Endothelial cell of umbilical vein (primary cell): ENCODE measurements at regions of chr11 and their contacts with region 1.

Region 1: DNA sequence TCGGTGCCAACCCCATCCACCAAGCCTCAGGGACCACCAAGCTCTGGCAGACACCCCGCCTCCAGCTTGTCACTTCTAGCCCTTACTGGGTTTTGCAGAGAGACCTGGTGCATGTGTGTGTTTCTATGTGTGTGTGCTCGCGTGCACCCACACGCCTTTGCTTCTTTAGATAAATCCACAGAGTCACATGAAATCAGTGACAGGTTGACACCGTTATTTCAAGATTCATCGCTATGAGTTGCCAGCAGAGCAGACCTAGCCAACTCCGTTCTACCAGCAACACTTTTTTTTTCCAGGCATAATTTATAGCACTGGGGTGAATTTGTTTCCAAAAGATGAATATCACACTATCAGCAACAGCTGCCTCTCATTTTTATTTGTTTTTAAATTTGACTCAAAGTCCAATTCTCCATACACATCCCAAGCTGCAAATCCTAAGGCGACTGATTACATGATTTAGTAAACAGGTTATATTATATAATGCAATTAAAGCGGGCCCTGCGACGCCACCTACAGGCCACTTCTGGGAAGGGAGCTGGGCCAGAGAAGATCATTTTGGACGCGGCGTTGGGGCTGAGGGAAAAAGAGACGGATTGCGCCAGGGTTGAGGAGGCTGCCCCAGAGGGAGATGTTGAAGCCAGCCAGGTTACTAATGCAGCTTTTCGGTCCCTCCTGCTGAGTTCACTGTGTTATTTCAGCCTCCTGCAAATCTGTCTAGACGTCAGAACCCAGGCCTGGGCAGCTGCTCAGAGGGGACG is 150.5 kb downstream of the FEZ1 start:
- DNase-seq: peak; percentile 67
- H3K4me3 ChIP-seq: no peak overlapping the region
- H3K27ac ChIP-seq: no peak overlapping the region
- H3K4me1 ChIP-seq: no peaks in the 10 kb centered on the region
- H3K27me3 ChIP-seq: no peaks in the 10 kb centered on the region
- CTCF ChIP-seq: peak; percentile 84 to 90
- POLR2A ChIP-seq: no peak

Region 2: GRCh38 chr11:124961972-124962609 is 383.5 kb before region 1 on chr11:
- CTCF ChIA-PET with region 1: interaction called, 40 read pairs
- POLR2A ChIA-PET with region 1: no interaction called
- dilution Hi-C with region 1: no loop called
- intact Hi-C with region 1: loop called (anchors 1 kb)
- DNase-seq: peak; percentile 86
- H3K4me3 ChIP-seq: no peak overlapping the region
- H3K27ac ChIP-seq: no peak overlapping the region
- H3K4me1 ChIP-seq: no peaks in the 10 kb centered on the region
- H3K27me3 ChIP-seq: no peaks in the 10 kb centered on the region
- CTCF ChIP-seq: peak; percentile 50 to 60
- POLR2A ChIP-seq: no peak

Region 3: GRCh38 chr11:125148743-125149142 is 196.9 kb before region 1 on chr11:
- CTCF ChIA-PET with region 1: interaction called, 45 read pairs
- POLR2A ChIA-PET with region 1: no interaction called
- dilution Hi-C with region 1: no loop called
- intact Hi-C with region 1: no loop called
- DNase-seq: no peak
- H3K4me3 ChIP-seq: no peak overlapping the region
- H3K27ac ChIP-seq: no peak overlapping the region
- H3K4me1 ChIP-seq: no peaks in the 10 kb centered on the region
- H3K27me3 ChIP-seq: peaks cover 8 to 13% of the 10 kb centered on the region in 2 experiments
- CTCF ChIP-seq: no peak
- POLR2A ChIP-seq: no peak

Region 4: DNA sequence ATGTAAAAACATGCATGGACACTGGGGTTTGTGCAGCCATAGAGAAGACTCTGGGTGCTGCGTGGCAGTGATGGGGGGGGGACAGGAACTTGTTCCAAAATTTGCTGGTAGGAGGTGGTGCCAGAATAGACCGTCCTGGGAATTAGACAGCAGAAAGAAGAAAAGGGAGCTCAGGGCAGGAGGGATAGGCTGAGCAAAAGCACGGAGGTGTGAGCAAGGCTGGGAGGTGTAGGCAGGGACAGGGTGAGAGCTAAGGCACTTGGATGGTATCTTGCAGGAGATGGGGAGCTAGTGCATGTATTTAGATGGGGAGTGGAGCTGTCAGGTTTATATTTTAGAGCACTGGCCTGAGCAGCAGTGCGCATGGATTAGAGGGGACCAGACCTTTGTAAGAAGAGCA is 127.3 kb before region 1 on chr11:
- CTCF ChIA-PET with region 1: interaction called, 21 read pairs
- POLR2A ChIA-PET with region 1: no interaction called
- dilution Hi-C with region 1: no loop called
- intact Hi-C with region 1: no loop called
- DNase-seq: no peak
- H3K4me3 ChIP-seq: no peak overlapping the region
- H3K27ac ChIP-seq: no peak overlapping the region
- H3K4me1 ChIP-seq: no peaks in the 10 kb centered on the region
- H3K27me3 ChIP-seq: peaks cover 4 to 24% of the 10 kb centered on the region in 2 experiments
- CTCF ChIP-seq: no peak
- POLR2A ChIP-seq: no peak

Region 5: GRCh38 chr11:125281831-125282595 is 63.6 kb before region 1 on chr11:
- CTCF ChIA-PET with region 1: interaction called, 14 read pairs
- POLR2A ChIA-PET with region 1: no interaction called
- dilution Hi-C with region 1: no loop called
- intact Hi-C with region 1: no loop called
- DNase-seq: no peak
- H3K4me3 ChIP-seq: no peak overlapping the region
- H3K27ac ChIP-seq: no peak overlapping the region
- H3K4me1 ChIP-seq: no peaks in the 10 kb centered on the region
- H3K27me3 ChIP-seq: peaks cover 0 to 4% of the 10 kb centered on the region in 2 experiments
- CTCF ChIP-seq: no peak
- POLR2A ChIP-seq: no peak

Region 6: GRCh38 chr11:125335106-125335505 is 10.5 kb before region 1 on chr11:
- CTCF ChIA-PET with region 1: interaction called, 67 read pairs
- POLR2A ChIA-PET with region 1: no interaction called
- dilution Hi-C with region 1: no loop called
- intact Hi-C with region 1: no loop called
- DNase-seq: no peak
- H3K4me3 ChIP-seq: no peak overlapping the region
- H3K27ac ChIP-seq: no peak overlapping the region
- H3K4me1 ChIP-seq: no peaks in the 10 kb centered on the region
- H3K27me3 ChIP-seq: peaks cover 5 to 13% of the 10 kb centered on the region in 2 experiments
- CTCF ChIP-seq: no peak
- POLR2A ChIP-seq: no peak

Region 7: GRCh38 chr11:125429166-125429707 is 83.6 kb after region 1 on chr11:
- CTCF ChIA-PET with region 1: interaction called, 12 read pairs
- POLR2A ChIA-PET with region 1: no interaction called
- dilution Hi-C with region 1: no loop called
- intact Hi-C with region 1: no loop called
- DNase-seq: peak; percentile 59
- H3K4me3 ChIP-seq: no peak overlapping the region
- H3K27ac ChIP-seq: no peak overlapping the region
- H3K4me1 ChIP-seq: no peaks in the 10 kb centered on the region
- H3K27me3 ChIP-seq: no peaks in the 10 kb centered on the region
- CTCF ChIP-seq: peak; percentile 70 to 81
- POLR2A ChIP-seq: no peak

Region 8: GRCh38 chr11:125799808-125800207 is 454.2 kb after region 1 on chr11:
- CTCF ChIA-PET with region 1: no interaction called
- POLR2A ChIA-PET with region 1: no interaction called
- dilution Hi-C with region 1: no loop called
- intact Hi-C with region 1: no loop called
- DNase-seq: no peak
- H3K4me3 ChIP-seq: no peak overlapping the region
- H3K27ac ChIP-seq: no peak overlapping the region
- H3K4me1 ChIP-seq: no peaks in the 10 kb centered on the region
- H3K27me3 ChIP-seq: no peaks in the 10 kb centered on the region
- CTCF ChIP-seq: no peak
- POLR2A ChIP-seq: no peak